ENCODE measurements at regions of chrX and their contacts with region 1.

Region 1: DNA sequence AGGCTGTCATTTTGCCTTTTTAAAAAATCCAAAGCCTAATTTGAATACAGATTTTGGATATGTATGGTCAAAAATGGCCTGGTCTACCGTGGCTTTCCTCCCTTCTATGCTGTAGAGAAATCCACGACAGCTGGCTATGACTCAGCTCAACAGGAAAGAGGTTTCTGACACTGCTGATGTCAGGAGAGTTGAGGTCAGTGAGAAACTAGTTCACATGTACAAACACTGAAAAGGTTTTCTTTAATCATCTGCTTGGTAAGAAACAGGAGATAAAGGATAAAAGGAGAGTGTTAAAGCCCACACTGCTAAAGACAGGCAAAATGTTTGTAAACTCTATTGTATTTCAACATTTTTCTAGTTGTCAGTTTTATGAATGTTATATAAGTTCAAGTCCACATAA is 113.9 kb downstream of the NYX start:
- DNase-seq: no peak
- ATAC-seq: peak; percentile 49
- H3K4me3 ChIP-seq: no peak overlapping the region
- H3K4me3 Mint-ChIP-seq: no peak overlapping the region
- H3K27ac ChIP-seq: no peak overlapping the region
- H3K27ac Mint-ChIP-seq: no peak overlapping the region
- H3K4me1 ChIP-seq: peaks cover 7 to 13% of the 10 kb centered on the region in 2 donors
- H3K4me1 Mint-ChIP-seq: peaks cover 20% of the 10 kb centered on the region
- H3K27me3 ChIP-seq: no peaks in the 10 kb centered on the region
- H3K27me3 Mint-ChIP-seq: no peaks in the 10 kb centered on the region
- CTCF ChIP-seq: no peak

Region 2: GRCh38 chrX:41759817-41760216 is 198.8 kb after region 1 on chrX:
- CTCF ChIA-PET with region 1: interaction called, 42 read pairs
- POLR2A ChIA-PET with region 1: no interaction called
- intact Hi-C with region 1: loop called (anchors 1 kb)
- DNase-seq: peak; percentile 55
- ATAC-seq: no peak
- H3K4me3 ChIP-seq: no peak overlapping the region
- H3K4me3 Mint-ChIP-seq: no peak overlapping the region
- H3K27ac ChIP-seq: no peak overlapping the region
- H3K27ac Mint-ChIP-seq: no peak overlapping the region
- H3K4me1 ChIP-seq: no peaks in the 10 kb centered on the region
- H3K4me1 Mint-ChIP-seq: peaks cover 3% of the 10 kb centered on the region
- H3K27me3 ChIP-seq: no peaks in the 10 kb centered on the region
- H3K27me3 Mint-ChIP-seq: no peaks in the 10 kb centered on the region
- CTCF ChIP-seq: peak; percentile 64